ENCODE measurements at regions of chr9 and their contacts with region 1.

Region 1: DNA sequence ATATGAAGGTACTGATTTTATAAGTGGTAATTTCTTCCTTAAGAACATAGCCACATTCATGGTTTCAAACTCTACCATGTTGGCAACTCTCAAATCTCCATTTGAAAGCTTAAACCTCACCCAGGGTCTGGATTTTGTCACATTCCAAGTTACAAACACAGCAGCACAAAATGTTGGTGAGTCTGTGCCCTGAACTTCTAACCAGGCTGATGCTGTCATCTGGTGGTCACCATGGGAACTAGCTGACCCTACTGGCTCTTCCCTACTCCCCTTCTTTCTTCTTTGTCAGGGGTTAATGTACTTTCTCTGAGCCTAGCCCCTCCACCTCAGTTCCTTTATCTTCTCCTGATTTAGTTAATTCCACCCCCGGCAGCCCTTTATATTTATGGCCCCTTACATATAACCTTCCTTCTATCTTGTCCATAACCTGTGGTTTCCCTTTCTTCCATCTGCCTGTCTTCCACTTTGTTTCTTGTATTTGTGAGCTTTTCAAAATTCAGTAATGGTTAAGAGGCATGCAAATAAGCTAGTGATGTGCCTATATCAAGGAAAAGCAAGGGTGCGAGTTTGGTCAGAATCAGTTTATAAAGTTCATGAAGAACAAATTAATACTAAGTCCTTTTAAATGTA is 35.9 kb downstream of the TGFBR1 start:
- DNase-seq: peak; percentile 30
- H3K4me3 ChIP-seq: no peak overlapping the region
- H3K27ac ChIP-seq: no peak overlapping the region
- H3K4me1 ChIP-seq: no peaks in the 10 kb centered on the region
- H3K27me3 ChIP-seq: no peaks in the 10 kb centered on the region
- CTCF ChIP-seq: peak; percentile 59

Region 2: GRCh38 chr9:98848450-98849149 is 292.2 kb before region 1 on chr9:
- intact Hi-C with region 1: loop called (anchors 5 kb)
- DNase-seq: peak; percentile 94
- H3K4me3 ChIP-seq: no peak overlapping the region
- H3K27ac ChIP-seq: peak overlapping the region; percentile 42
- H3K4me1 ChIP-seq: no peaks in the 10 kb centered on the region
- H3K27me3 ChIP-seq: no peaks in the 10 kb centered on the region
- CTCF ChIP-seq: peak; percentile 85

Measured in colonic mucosa (tissue), 4 donors.